Activated CD8-positive, alpha-beta T cell treated with anti-CD3 and anti-CD28 coated beads, Interleukin-2, amount 10 ng/mL, durations not matched to agents 7 days and 5 days (primary cell): ENCODE measurements at regions of chr20 and their contacts with region 1.

Region 1: GRCh38 chr20:63750807-63751470 is 11.4 kb downstream of the SLC2A4RG start:
- DNase-seq: peak; percentile 81
- ATAC-seq: peak; percentile 78
- H3K4me3 Mint-ChIP-seq: peak overlapping the region; percentile 66
- H3K27ac Mint-ChIP-seq: peak overlapping the region; percentile 92
- H3K4me1 Mint-ChIP-seq: peaks cover 29% of the 10 kb centered on the region
- H3K27me3 Mint-ChIP-seq: peaks cover 2% of the 10 kb centered on the region

Region 2: DNA sequence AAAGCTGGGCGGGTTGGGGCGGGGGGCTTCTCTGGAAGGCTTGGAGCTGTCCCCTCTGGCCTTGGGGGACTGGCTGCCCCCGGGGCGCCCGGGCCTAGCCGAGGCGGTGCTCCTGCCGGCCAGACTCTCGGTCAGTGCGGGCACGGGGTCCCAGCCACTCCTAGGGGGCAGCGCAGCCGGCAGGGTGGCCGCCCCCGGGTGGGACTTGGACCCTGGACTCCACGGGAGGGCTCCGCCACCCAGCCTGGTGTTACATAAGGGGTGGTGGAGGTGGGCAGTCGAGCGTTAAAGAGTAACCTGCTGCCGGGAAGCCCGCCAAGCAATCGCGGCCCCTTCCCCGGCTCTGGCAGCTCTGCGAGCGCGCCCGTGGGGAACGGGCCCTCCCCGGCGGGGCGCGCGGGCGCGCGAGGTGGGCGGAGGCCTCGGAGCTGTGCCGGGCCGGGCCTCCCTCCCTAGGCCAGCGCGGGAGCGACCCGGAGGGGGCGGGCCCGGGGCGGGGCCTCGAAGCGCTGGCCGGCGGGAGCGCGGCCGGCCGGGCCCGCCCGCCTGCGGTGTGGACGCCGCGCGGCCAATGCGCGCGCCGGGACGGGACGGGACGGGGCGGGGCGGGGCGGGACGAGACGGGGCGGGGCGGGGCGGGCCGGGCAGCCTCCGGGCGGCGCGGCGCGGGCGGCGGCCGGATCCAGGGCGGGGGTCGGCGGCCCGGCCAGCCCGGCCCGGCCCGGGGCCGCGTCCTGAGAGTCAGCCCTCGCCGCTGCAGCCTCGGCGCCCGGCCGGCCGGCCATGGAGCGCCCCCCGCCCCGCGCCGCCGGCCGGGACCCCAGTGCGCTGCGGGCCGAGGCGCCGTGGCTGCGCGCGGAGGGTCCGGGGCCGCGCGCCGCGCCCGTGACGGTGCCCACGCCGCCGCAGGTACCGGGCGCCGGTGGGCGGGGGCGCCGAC is 11.5 kb before region 1 on chr20 and contains the start of gene SLC2A4RG:
- CTCF ChIA-PET with region 1: interaction called, 5 read pairs
- POLR2A ChIA-PET with region 1: interaction called, 14 read pairs
- DNase-seq: peak; percentile 71
- ATAC-seq: peak; percentile 51
- H3K4me3 Mint-ChIP-seq: peak within 1 kb of the TSS; percentile 87
- H3K27ac Mint-ChIP-seq: no peak within 1 kb of the TSS
- H3K4me1 Mint-ChIP-seq: peaks cover 19% of the 10 kb centered on the region
- H3K27me3 Mint-ChIP-seq: no peaks in the 10 kb centered on the region
- total RNA-seq, gene SLC2A4RG: 97.2 TPM

Region 3: DNA sequence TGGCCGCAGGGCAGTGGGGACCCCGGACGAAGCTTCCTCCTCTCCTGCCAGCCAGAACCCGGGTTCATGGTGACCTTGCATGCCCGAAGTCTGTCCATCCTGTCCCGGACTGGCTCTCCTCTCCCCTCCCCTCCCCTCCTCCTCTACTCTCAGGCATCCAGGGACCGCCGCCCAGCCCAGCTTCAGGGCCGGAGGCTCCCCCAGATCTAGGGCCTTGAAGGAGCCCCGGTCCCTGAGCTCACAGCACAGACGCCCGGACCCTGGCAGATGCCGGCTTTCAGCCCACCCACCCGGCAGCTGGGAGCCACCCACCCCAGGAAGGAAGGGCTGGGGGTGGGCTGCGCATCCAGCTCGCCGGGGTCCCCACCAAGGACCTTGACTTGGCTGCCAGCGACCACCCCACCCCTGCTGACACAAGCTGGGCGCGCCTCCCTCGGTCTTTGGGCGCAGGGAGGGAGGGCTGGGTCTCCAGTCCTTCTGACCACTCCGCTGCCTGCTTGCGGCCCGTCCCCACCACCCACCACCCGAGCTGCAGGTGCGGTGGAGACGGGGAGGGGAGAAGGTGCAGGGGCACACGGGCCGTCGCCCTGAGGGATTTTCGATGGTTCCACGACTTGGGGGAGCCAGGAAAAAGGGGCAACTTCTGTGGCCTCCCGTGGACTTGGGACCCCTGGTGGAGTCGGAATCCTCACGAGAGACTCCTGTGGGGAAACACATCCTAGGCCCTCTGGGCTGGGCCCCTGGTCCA is 104.6 kb after region 1 on chr20:
- CTCF ChIA-PET with region 1: no interaction called
- POLR2A ChIA-PET with region 1: no interaction called
- DNase-seq: no peak
- ATAC-seq: no peak
- H3K4me3 Mint-ChIP-seq: no peak overlapping the region
- H3K27ac Mint-ChIP-seq: no peak overlapping the region
- H3K4me1 Mint-ChIP-seq: peaks cover 34% of the 10 kb centered on the region
- H3K27me3 Mint-ChIP-seq: peaks cover 8% of the 10 kb centered on the region